ENCODE measurements at regions of chr1 and their contacts with region 1.

Region 1: GRCh38 chr1:67053785-67054772 is at the start of gene SLC35D1:
- DNase-seq: peak; percentile 37 to 61
- H3K4me3 ChIP-seq: peak within 1 kb of the TSS; percentile 99
- H3K27ac ChIP-seq: peak within 1 kb of the TSS; percentile 41
- H3K4me1 ChIP-seq: peaks cover 13% of the 10 kb centered on the region
- H3K27me3 ChIP-seq: no peaks in the 10 kb centered on the region
- CTCF ChIP-seq: no peak
- total RNA-seq, gene SLC35D1: 2.3 and 2.6 TPM in 2 replicates

Region 2: DNA sequence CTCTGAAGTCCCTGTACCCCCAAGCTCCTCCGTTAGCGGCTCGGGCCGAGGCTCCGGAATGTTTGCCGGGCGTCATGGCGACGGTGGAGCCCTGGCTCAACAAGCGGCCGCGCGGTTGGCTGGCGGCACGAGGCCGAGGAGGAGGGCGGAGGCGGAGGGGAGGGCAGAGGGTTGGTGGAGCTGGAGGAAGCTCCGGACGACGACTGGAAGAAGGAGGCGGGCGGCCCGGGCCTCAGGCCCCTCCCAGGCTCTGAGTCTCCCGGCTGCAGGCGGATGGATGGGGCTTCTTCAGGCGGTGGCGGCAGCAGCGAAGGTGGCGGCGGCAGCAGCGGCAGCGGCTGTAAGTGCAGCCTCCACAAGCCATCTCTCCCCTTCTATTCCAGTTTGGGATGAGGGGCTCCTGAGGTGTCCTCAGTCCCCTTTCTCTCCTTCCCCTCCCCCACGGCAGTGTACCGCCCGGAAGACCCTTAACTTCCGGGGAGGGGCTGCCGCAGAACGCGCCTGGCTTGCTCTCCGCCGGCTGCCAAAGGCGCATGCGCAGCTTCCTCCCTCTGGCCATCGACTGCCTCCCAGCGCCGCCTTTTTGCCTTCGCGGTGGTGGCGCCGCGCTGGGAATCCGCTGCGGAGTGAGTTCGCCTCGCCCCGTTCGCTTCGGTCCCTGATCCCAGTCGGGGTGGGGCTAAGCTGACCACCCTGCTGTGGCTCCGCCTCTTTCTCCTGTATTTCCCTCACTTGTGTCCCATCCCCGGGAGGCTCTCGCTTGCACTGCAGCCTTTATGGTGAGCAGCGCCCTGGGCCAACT is 129.1 kb before region 1 on chr1 and contains the starts of genes DNAI4 and MIER1:
- CTCF ChIA-PET with region 1: no interaction called
- POLR2A ChIA-PET with region 1: no interaction called
- intact Hi-C with region 1: loop called (anchors 2 kb)
- DNase-seq: peak; percentile 93 to 99
- H3K4me3 ChIP-seq: peak within 1 kb of the TSS; percentile 72
- H3K27ac ChIP-seq: peak within 1 kb of the TSS; percentile 50
- H3K4me1 ChIP-seq: peaks cover 40% of the 10 kb centered on the region
- H3K27me3 ChIP-seq: no peaks in the 10 kb centered on the region
- CTCF ChIP-seq: no peak
- total RNA-seq, gene DNAI4: 8.2 and 12.6 TPM in 2 replicates
- total RNA-seq, gene MIER1: 26.5 and 30.4 TPM in 2 replicates

Region 3: GRCh38 chr1:67031121-67031858 is 22.8 kb before region 1 on chr1:
- CTCF ChIA-PET with region 1: no interaction called
- POLR2A ChIA-PET with region 1: no interaction called
- intact Hi-C with region 1: no loop called
- DNase-seq: no peak
- H3K4me3 ChIP-seq: no peak overlapping the region
- H3K27ac ChIP-seq: no peak overlapping the region
- H3K4me1 ChIP-seq: no peaks in the 10 kb centered on the region
- H3K27me3 ChIP-seq: no peaks in the 10 kb centered on the region
- CTCF ChIP-seq: no peak

Region 4: DNA sequence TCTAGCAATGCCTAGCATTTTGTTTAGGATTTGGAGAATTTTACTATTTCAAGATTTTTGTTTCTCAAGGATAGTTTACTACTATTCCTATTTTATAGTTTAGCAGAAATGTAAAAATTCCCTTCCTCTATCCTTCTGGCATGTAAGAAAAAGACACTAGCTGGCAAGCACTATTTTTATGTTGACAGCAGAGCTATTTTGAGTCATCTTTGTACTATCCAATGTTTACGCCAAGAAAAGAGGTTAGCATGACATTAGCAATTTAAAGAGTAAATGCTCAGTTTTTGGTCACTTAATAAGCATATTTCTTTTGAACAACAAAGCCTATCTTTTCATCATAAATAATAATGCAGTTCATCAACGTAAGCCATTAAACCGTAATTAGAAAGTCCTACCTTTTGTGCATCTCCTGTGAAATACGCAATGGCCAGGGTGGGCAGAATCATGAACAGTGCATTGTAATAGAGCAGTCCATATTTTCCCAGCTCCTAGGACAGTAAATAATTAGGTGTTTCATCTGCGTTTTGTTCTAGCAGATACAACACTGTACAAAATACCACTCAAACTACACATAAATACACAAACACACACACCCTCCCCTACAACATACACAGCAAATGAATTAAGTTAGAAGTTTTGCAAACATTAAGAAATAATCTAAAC is 12.1 kb before region 1 on chr1:
- CTCF ChIA-PET with region 1: no interaction called
- POLR2A ChIA-PET with region 1: interaction called, 10 read pairs
- intact Hi-C with region 1: no loop called
- DNase-seq: no peak
- H3K4me3 ChIP-seq: no peak overlapping the region
- H3K27ac ChIP-seq: no peak overlapping the region
- H3K4me1 ChIP-seq: no peaks in the 10 kb centered on the region
- H3K27me3 ChIP-seq: no peaks in the 10 kb centered on the region
- CTCF ChIP-seq: no peak